A673 (cell line): ENCODE measurements at regions of chr14 and their contacts with region 1.

Region 1: GRCh38 chr14:53011053-53011462 is 60.2 kb upstream of the FERMT2 start:
- DNase-seq: peak; percentile 72
- H3K4me3 ChIP-seq: no peak overlapping the region
- H3K27ac ChIP-seq: no peak overlapping the region
- H3K4me1 ChIP-seq: peaks cover 6% of the 10 kb centered on the region
- H3K27me3 ChIP-seq: no peaks in the 10 kb centered on the region
- CTCF ChIP-seq: no peak

Region 2: GRCh38 chr14:52918486-52918885 is 92.6 kb before region 1 on chr14:
- CTCF ChIA-PET with region 1: no interaction called
- POLR2A ChIA-PET with region 1: no interaction called
- intact Hi-C with region 1: no loop called
- DNase-seq: peak; percentile 75
- H3K4me3 ChIP-seq: no peak overlapping the region
- H3K27ac ChIP-seq: peak overlapping the region; percentile 65
- H3K4me1 ChIP-seq: peaks cover 60% of the 10 kb centered on the region
- H3K27me3 ChIP-seq: no peaks in the 10 kb centered on the region
- CTCF ChIP-seq: no peak

Region 3: GRCh38 chr14:52936437-52936836 is 74.6 kb before region 1 on chr14:
- CTCF ChIA-PET with region 1: no interaction called
- POLR2A ChIA-PET with region 1: interaction called, 25 read pairs
- intact Hi-C with region 1: no loop called
- DNase-seq: no peak
- H3K4me3 ChIP-seq: no peak overlapping the region
- H3K27ac ChIP-seq: no peak overlapping the region
- H3K4me1 ChIP-seq: peaks cover 25% of the 10 kb centered on the region
- H3K27me3 ChIP-seq: no peaks in the 10 kb centered on the region
- CTCF ChIP-seq: no peak

Region 4: DNA sequence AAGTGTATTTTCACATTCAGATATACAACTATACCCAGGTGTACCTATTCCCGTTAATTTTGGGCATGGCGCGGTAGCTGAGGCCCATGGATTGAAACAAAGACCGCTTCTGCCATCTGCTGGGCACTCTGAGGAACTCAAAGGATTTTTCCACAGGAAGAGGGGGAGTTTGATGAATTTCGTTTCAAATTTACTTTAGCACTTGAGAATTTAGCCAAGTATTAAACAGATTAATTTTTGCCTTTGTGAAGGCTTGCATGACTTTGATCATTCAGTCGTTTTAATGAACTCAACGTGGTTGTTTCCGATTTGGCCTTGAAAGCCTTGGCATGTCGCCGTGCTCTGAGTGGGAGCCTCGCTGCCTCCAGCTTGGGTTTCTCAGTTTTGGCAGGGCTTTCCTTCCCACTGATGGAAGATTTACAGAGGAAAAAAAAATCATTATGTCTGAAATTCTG is 295.2 kb after region 1 on chr14:
- CTCF ChIA-PET with region 1: no interaction called
- POLR2A ChIA-PET with region 1: no interaction called
- intact Hi-C with region 1: no loop called
- DNase-seq: peak; percentile 61
- H3K4me3 ChIP-seq: peak overlapping the region; percentile 37
- H3K27ac ChIP-seq: no peak overlapping the region
- H3K4me1 ChIP-seq: peaks cover 13% of the 10 kb centered on the region
- H3K27me3 ChIP-seq: peaks cover 16% of the 10 kb centered on the region
- CTCF ChIP-seq: peak; percentile 89